K562 (cell line): ENCODE measurements at regions of chr7 and their contacts with region 1.

Region 1: GRCh38 chr7:134327896-134328295 is 11.2 kb upstream of the SLC35B4 start:
- DNase-seq: peak; percentile 76 to 91 (median 82)
- ATAC-seq: peak; percentile 99
- H3K4me3 ChIP-seq: no peak overlapping the region
- H3K27ac ChIP-seq: no peak overlapping the region
- H3K4me1 ChIP-seq: no peaks in the 10 kb centered on the region
- H3K27me3 ChIP-seq: peaks cover 8 to 15% of the 10 kb centered on the region in 2 experiments
- CTCF ChIP-seq: peak; percentile 86 to 93 (median 92)
- EP300 ChIP-seq: no peak
- POLR2A ChIP-seq: no peak
- RAD21 ChIP-seq: peak; percentile 69 to 90

Region 2: DNA sequence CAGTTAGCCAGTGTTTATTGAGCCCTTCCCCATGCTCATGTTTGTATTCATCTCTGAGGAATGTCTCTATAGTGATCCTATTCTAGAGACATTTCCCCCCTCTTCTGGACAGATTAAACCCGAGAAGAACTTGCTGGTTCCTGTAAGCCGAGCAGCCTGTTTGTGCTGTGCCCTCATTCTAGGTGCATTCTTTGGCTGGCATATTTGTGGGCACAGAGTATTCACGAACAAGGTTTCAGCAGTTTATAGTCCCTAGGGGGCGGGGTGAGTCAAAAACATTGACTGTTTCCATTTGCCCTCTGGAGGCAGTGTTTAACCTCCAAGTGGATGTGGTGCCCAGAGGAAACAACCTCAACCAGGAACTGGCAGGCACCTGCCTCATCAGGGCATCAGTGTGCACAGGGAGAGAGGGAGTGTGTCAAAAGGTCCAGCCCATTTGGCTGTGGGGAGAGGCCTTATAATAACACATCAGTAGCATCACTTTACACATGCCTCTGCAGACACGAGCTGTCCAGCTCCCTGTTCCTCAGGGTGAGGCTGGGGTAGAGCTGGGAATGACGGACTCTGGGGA is 474.1 kb before region 1 on chr7:
- CTCF ChIA-PET with region 1: no interaction called
- POLR2A ChIA-PET with region 1: no interaction called
- in situ Hi-C with region 1: no loop called
- intact Hi-C with region 1: loop called (anchors 10 kb)
- DNase-seq: peak; percentile 34 to 54 (median 43)
- ATAC-seq: peak; percentile 96
- H3K4me3 ChIP-seq: no peak overlapping the region
- H3K27ac ChIP-seq: no peak overlapping the region
- H3K4me1 ChIP-seq: no peaks in the 10 kb centered on the region
- H3K27me3 ChIP-seq: no peaks in the 10 kb centered on the region
- CTCF ChIP-seq: peak; percentile 91 to 99 (median 99)
- EP300 ChIP-seq: no peak
- POLR2A ChIP-seq: no peak
- RAD21 ChIP-seq: peak in 1 of 2 experiments; percentile 64; a peak in 3 of 4 replicates

Region 3: DNA sequence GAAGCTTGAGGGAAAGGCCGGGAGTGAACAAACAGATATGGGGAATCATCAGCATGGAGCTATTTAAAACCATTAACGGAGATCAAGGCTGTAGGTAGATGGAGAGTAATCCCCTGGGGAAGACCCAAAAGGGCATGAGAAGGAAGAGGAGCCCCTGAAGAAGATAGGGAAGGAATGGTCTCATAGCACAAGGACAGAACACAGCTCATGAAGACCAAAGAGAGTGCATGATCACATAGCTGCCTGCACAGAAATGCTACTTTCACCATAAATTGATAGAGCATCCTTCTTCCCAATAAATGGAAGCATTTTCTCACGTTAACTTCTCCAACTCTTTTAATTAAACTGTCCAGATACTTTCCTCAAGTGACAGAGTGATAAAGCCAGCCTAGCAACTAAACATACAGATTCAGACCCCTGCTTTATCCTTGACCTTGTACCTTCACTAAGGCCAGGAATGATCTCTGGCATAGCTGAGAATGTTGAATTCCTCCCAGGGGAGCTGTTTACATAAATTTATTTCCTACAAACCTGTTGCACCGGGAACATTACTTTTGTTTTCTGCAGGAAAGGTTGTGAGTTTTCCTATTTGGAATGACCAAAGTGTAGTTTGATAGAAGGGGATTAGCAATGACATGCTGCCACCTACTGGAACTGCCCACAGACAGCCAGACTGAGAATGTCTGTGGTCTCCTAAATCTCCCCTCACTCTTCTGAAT is 311.5 kb before region 1 on chr7:
- CTCF ChIA-PET with region 1: no interaction called
- POLR2A ChIA-PET with region 1: no interaction called
- in situ Hi-C with region 1: no loop called
- intact Hi-C with region 1: loop called (anchors 10 kb)
- DNase-seq: peak in 2 of 4 experiments; percentile 57 to 58
- ATAC-seq: peak; percentile 89
- H3K4me3 ChIP-seq: no peak overlapping the region
- H3K27ac ChIP-seq: no peak overlapping the region
- H3K4me1 ChIP-seq: no peaks in the 10 kb centered on the region
- H3K27me3 ChIP-seq: no peaks in the 10 kb centered on the region
- CTCF ChIP-seq: peak; percentile 67 to 86 (median 84)
- EP300 ChIP-seq: no peak
- POLR2A ChIP-seq: no peak
- RAD21 ChIP-seq: peak; percentile 79 to 81

Region 4: GRCh38 chr7:134140889-134141867 is 186.7 kb before region 1 on chr7:
- CTCF ChIA-PET with region 1: no interaction called
- POLR2A ChIA-PET with region 1: no interaction called
- in situ Hi-C with region 1: no loop called
- intact Hi-C with region 1: loop called (anchors 1 kb)
- DNase-seq: peak; percentile 89 to 92 (median 90)
- ATAC-seq: peak; percentile 99
- H3K4me3 ChIP-seq: no peak overlapping the region
- H3K27ac ChIP-seq: no peak overlapping the region
- H3K4me1 ChIP-seq: peaks cover 0 to 3% of the 10 kb centered on the region in 2 experiments; a peak in 2 of 5 replicates
- H3K27me3 ChIP-seq: peaks cover 0 to 4% of the 10 kb centered on the region in 2 experiments; a peak in 1 of 5 replicates
- CTCF ChIP-seq: peak; percentile 92 to 98 (median 97)
- EP300 ChIP-seq: 0 out of 2 replicates have a peak, but pooled peaks have one; percentile 13
- POLR2A ChIP-seq: no peak
- RAD21 ChIP-seq: peak; percentile 93 to 95

Region 5: DNA sequence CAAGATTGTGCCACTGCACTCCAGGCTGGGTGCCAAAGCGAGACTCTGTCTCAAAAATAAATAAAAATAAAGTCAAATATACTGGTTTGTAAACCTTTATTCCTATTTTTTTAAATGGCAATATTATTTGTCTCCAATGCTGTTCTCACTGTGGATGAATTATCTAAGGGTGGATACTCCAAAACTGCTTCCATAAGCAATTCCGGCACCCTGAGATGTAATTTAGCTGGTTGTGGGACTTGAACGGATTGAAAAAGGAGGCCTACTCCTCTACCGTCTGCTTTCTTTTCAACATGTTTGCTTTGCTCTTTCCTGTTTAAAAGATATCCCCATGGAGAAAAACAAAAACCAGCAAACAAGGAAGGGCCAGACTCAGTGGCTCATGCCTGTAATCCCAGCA is 65.6 kb before region 1 on chr7:
- CTCF ChIA-PET with region 1: no interaction called
- POLR2A ChIA-PET with region 1: no interaction called
- in situ Hi-C with region 1: no loop called
- intact Hi-C with region 1: no loop called
- DNase-seq: no peak
- ATAC-seq: no peak
- H3K4me3 ChIP-seq: no peak overlapping the region
- H3K27ac ChIP-seq: no peak overlapping the region
- H3K4me1 ChIP-seq: no peaks in the 10 kb centered on the region
- H3K27me3 ChIP-seq: peaks cover 18% of the 10 kb centered on the region in 2 experiments; a peak in 4 of 5 replicates
- CTCF ChIP-seq: no peak
- EP300 ChIP-seq: no peak
- POLR2A ChIP-seq: no peak
- RAD21 ChIP-seq: no peak

Region 6: GRCh38 chr7:134308548-134308947 is 19.3 kb before region 1 on chr7:
- CTCF ChIA-PET with region 1: no interaction called
- POLR2A ChIA-PET with region 1: no interaction called
- in situ Hi-C with region 1: no loop called
- intact Hi-C with region 1: no loop called
- DNase-seq: no peak
- ATAC-seq: no peak
- H3K4me3 ChIP-seq: no peak overlapping the region
- H3K27ac ChIP-seq: no peak overlapping the region
- H3K4me1 ChIP-seq: no peaks in the 10 kb centered on the region
- H3K27me3 ChIP-seq: no peaks in the 10 kb centered on the region
- CTCF ChIP-seq: no peak
- EP300 ChIP-seq: no peak
- POLR2A ChIP-seq: no peak
- RAD21 ChIP-seq: no peak

Region 7: DNA sequence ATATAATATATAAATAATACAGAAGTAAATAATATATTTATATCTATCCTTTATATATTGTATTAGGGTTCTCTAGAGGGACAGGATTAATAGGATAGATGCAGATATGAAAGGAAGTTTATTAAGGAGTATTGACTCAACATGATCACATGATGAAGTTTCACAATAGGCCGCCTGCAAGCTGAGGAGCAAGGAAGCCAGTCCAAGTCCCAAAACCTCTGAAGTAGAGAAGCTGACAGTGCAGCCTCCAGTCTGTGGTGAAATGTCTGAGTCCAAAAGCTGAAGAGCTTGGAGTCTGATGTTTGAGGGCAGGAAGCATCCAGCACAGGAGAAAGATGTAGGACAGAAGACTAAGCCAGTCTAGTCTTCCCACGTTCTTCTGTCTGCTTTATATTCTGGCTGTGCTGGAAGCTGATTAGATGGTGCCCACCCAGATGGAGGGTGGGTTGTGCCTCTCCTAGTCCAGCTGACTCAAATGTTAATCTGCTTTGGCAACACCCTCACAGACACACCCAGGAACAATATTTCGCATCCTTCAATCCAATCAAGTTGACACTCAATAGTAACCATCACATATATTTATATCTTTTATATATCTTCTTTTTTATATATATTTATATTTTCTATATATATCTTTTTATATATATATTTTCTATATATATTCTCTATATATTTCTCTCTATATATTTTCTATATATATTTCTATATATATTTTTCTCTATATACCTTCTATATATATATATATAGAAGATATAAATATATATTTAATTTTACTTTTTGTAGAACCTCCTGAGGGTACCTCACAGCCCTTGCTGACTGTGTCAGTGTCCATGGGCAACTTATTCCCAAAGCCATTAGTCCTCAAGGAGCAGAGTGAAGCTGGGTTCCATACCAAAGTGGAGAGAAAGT is 174.8 kb after region 1 on chr7:
- CTCF ChIA-PET with region 1: no interaction called
- POLR2A ChIA-PET with region 1: no interaction called
- in situ Hi-C with region 1: no loop called
- intact Hi-C with region 1: no loop called
- DNase-seq: no peak
- ATAC-seq: no peak
- H3K4me3 ChIP-seq: no peak overlapping the region
- H3K27ac ChIP-seq: no peak overlapping the region
- H3K4me1 ChIP-seq: no peaks in the 10 kb centered on the region
- H3K27me3 ChIP-seq: no peaks in the 10 kb centered on the region; a peak in 1 of 5 replicates
- CTCF ChIP-seq: no peak
- EP300 ChIP-seq: no peak
- POLR2A ChIP-seq: no peak
- RAD21 ChIP-seq: no peak